Tibial artery (tissue), 4 donors: ENCODE measurements at regions of chr14 and their contacts with region 1.

Region 1: DNA sequence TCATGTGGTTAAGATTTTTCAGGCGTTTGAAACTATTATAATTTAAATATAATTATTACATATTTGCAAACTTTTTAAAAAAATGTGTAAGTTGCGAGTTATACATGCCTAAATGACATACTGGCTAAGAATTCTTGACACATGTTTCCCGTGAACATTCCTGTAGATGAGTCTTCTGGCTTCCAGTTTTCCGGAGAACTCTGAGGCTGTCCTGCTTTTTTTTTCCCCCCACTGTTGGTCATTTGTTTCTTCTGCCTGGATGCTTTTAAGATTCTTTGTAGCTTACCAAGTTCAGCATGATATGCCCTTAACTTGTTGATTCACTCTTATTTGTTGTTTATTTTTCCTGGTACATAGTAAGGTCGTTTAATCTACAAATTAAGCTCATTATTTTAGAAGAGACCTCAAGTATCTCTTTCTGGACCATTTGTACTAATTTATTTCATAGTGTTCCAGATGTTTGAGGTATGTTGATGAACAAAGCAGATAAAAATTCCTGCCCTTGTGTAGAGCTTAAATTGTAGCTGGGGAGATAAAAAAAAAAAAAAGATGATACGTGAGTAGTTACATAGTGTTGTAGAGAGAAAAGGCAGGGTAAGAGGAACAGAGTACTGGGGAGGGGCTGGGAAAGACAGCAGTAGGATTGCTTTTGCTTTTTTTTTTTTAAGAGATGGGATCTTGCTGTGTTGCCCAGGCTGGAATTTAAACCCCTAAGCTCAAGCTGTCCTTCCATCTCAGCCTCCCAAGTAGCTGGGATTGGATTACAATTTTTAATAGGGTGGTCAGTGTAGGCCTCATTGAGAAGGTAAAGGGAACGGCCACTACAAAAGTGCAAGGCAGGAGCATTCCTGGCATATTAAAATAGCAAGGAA is 32.8 kb downstream of the ARHGAP5 start:
- DNase-seq: no peak
- H3K4me3 ChIP-seq: no peak overlapping the region
- H3K27ac ChIP-seq: no peak overlapping the region
- H3K4me1 ChIP-seq: peaks cover 0 to 47% (median 7%) of the 10 kb centered on the region in 4 donors
- H3K27me3 ChIP-seq: no peaks in the 10 kb centered on the region
- CTCF ChIP-seq: no peak

Region 2: GRCh38 chr14:30681752-30682355 is 1428.1 kb before region 1 on chr14:
- intact Hi-C with region 1: loop called (anchors 5 kb)
- DNase-seq: no peak
- H3K4me3 ChIP-seq: no peak overlapping the region
- H3K27ac ChIP-seq: no peak overlapping the region
- H3K4me1 ChIP-seq: no peaks in the 10 kb centered on the region
- H3K27me3 ChIP-seq: no peaks in the 10 kb centered on the region
- CTCF ChIP-seq: no peak

Region 3: GRCh38 chr14:31858868-31859267 is 251.0 kb before region 1 on chr14:
- intact Hi-C with region 1: no loop called
- DNase-seq: no peak
- H3K4me3 ChIP-seq: no peak overlapping the region
- H3K27ac ChIP-seq: no peak overlapping the region
- H3K4me1 ChIP-seq: no peaks in the 10 kb centered on the region
- H3K27me3 ChIP-seq: no peaks in the 10 kb centered on the region
- CTCF ChIP-seq: no peak

Region 4: DNA sequence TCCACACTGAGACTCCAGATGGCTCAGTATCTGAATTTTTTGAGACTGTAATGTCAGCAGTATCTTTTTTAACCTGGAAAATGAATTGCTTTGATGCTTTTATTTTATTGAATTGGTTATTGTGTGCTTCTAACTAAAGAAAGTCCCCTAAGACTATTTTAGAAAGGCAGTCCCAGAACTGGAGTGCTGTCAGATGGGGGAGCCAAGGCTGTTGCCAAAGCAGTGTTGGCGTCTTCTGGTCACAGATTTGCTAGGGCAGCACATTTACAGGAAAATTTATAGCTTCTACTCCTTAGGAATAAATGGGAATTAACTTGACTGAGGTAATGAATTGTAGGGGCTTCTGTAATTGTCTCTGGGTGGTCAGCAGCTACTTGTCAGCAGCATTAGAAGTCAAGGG is 189.9 kb before region 1 on chr14:
- intact Hi-C with region 1: no loop called
- DNase-seq: no peak
- H3K4me3 ChIP-seq: no peak overlapping the region
- H3K27ac ChIP-seq: no peak overlapping the region
- H3K4me1 ChIP-seq: no peaks in the 10 kb centered on the region
- H3K27me3 ChIP-seq: no peaks in the 10 kb centered on the region
- CTCF ChIP-seq: no peak